ENCODE measurements at regions of chr5 and their contacts with region 1.

Region 1: GRCh38 chr5:163564321-163564938 is 59.0 kb downstream of the MAT2B start:
- DNase-seq: peak; percentile 56
- H3K27ac ChIP-seq: no peak overlapping the region
- CTCF ChIP-seq: peak; percentile 97

Region 2: DNA sequence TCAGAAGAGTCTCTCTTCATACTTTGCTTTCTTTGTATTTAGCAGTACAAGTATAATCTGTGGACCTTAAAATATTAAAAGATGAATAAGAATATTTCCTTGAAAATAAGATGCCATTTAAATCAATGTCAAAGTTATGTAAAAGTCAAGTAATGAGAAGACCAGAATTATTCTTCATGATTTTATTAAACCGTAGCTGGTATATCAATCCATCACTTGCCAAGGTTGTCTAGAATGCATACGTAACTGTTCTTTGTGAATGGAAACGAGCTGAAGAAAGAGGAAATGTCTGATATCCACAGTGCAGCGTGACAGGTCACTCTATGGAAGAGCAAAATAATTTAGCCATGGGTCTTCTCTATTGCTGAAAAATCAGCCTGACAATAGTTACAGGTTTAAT is 615.8 kb before region 1 on chr5:
- CTCF ChIA-PET with region 1: no interaction called
- POLR2A ChIA-PET with region 1: no interaction called
- DNase-seq: no peak
- H3K27ac ChIP-seq: no peak overlapping the region
- CTCF ChIP-seq: no peak

Region 3: GRCh38 chr5:164504141-164504772 is 939.8 kb after region 1 on chr5:
- CTCF ChIA-PET with region 1: interaction called, 10 read pairs
- POLR2A ChIA-PET with region 1: no interaction called
- DNase-seq: peak; percentile 36
- H3K27ac ChIP-seq: no peak overlapping the region
- CTCF ChIP-seq: peak; percentile 90

Measured in RWPE1 (cell line).